ENCODE measurements at regions of chr11 and their contacts with region 1.

Region 1: GRCh38 chr11:121661880-121662486 is 209.2 kb upstream of the SORL1-AS1 start:
- DNase-seq: no peak
- H3K4me3 Mint-ChIP-seq: no peak overlapping the region
- H3K27ac Mint-ChIP-seq: no peak overlapping the region
- H3K4me1 Mint-ChIP-seq: no peaks in the 10 kb centered on the region
- H3K27me3 Mint-ChIP-seq: peaks cover 9% of the 10 kb centered on the region

Region 2: GRCh38 chr11:120735035-120735434 is 926.9 kb before region 1 on chr11:
- intact Hi-C with region 1: no loop called
- DNase-seq: no peak
- H3K4me3 Mint-ChIP-seq: no peak overlapping the region
- H3K27ac Mint-ChIP-seq: no peak overlapping the region
- H3K4me1 Mint-ChIP-seq: no peaks in the 10 kb centered on the region
- H3K27me3 Mint-ChIP-seq: peaks cover 7% of the 10 kb centered on the region

Region 3: DNA sequence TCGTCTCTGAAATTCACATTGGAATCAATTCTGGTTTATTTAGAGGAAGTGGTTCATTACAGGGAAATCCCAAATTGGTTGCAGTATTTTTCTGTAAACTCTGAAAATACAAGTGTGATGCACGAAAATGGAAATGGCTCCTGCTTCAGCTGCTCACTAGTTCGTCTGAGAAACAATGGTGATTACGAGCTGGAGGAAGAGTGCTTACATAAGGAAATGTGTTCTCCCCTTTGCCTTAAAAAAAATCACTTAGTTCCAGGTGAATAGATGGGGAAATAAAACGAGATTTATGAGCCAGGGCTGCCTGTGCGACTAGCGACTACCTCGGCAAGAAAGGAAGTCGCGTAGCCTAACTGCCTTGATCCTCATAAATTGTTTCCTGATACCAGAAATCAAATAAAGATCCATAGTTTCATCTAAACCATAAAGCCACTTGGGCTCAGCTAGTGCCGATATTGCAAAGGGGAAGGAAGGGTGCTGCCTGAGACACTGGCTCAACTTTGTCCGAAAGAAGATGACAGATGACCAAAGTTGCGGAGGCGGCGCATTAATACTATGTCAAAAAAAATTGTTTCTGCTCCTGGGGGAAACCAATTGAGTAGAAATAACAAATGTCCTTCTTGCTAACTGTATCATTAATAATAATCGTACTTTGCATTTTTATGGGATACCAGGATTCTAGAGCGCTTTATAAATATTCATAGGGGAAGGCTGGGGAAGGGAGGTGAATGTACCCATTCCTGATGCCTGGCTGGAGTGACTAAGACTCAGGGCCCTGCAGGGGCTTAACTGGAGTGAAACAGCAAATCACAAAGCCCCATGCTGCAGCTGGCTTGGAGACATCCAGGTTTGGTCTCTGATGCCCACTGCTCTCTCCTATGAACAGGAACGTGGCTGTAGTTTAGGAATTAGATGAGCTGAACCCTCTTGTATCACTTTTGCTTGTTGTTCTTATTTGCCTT is 268.3 kb after region 1 on chr11:
- intact Hi-C with region 1: loop called (anchors 10 kb)
- DNase-seq: no peak
- H3K4me3 Mint-ChIP-seq: no peak overlapping the region
- H3K27ac Mint-ChIP-seq: no peak overlapping the region
- H3K4me1 Mint-ChIP-seq: no peaks in the 10 kb centered on the region
- H3K27me3 Mint-ChIP-seq: peaks cover 3% of the 10 kb centered on the region

Measured in activated T-helper 2 cell treated with anti-CD3 and anti-CD28 coated beads, Interferon-gamma antibody, Interleukin-2, Interleukin-4, amounts not matched to agents 10 μg/mL and 5 μg/mL and 100 μg/mL, durations not matched to agents 14 hours and 24 hours and 36 hours (primary cell).